AG04450 (cell line): ENCODE measurements at regions of chr4 and their contacts with region 1.

Region 1: GRCh38 chr4:114791976-114792375 is 193.4 kb downstream of the UGT8 start:
- DNase-seq: no peak
- H3K4me3 ChIP-seq: no peak overlapping the region
- H3K27ac ChIP-seq: no peak overlapping the region
- H3K27me3 ChIP-seq: no peaks in the 10 kb centered on the region
- CTCF ChIP-seq: no peak

Region 2: GRCh38 chr4:114752391-114753165 is 39.4 kb before region 1 on chr4:
- CTCF ChIA-PET with region 1: no interaction called
- POLR2A ChIA-PET with region 1: no interaction called
- DNase-seq: no peak
- H3K4me3 ChIP-seq: no peak overlapping the region
- H3K27ac ChIP-seq: no peak overlapping the region
- H3K27me3 ChIP-seq: no peaks in the 10 kb centered on the region
- CTCF ChIP-seq: no peak

Region 3: GRCh38 chr4:114807759-114808404 is 15.9 kb after region 1 on chr4:
- CTCF ChIA-PET with region 1: interaction called, 26 read pairs
- POLR2A ChIA-PET with region 1: no interaction called
- DNase-seq: no peak
- H3K4me3 ChIP-seq: no peak overlapping the region
- H3K27ac ChIP-seq: no peak overlapping the region
- H3K27me3 ChIP-seq: no peaks in the 10 kb centered on the region
- CTCF ChIP-seq: peak; percentile 83

Region 4: DNA sequence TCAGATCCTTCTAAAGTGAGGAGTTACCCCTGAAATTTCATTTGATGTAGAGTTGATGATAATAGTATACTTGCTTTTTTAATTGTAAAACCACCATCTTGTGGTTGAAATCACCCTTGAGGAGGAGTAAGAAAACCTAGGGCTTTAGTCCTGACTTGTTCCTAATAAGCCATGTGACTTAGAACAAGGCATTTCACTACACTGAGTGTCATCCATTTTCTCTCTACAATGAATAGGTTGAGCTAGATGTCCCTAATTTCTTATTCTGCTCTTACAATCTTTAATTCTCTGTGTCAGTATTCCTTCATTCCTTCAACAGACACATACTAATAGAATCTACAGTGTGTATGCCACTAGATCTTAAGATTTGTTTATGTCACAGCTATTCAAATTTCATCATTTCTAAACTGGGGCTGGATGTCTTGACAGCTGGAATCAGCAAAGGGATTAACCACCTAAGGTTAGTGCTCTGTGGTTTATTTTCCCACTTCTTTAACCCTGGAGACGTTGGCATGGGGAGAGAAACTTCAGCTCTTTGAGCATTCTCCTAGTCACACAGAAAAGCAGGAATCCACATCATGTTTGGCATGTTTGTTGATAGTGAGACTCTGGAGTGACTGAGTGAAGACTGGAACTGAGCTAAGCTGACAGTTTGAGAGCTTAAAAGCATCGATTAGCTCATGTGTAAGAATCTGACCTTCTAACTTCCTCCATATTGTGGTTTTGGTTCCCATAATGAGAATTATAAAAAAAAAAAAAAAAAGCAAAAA is 75.1 kb after region 1 on chr4:
- CTCF ChIA-PET with region 1: no interaction called
- POLR2A ChIA-PET with region 1: no interaction called
- DNase-seq: no peak
- H3K4me3 ChIP-seq: no peak overlapping the region
- H3K27ac ChIP-seq: no peak overlapping the region
- H3K27me3 ChIP-seq: no peaks in the 10 kb centered on the region
- CTCF ChIP-seq: no peak